PC-9 (cell line): ENCODE measurements at regions of chr1 and their contacts with region 1.

Region 1: DNA sequence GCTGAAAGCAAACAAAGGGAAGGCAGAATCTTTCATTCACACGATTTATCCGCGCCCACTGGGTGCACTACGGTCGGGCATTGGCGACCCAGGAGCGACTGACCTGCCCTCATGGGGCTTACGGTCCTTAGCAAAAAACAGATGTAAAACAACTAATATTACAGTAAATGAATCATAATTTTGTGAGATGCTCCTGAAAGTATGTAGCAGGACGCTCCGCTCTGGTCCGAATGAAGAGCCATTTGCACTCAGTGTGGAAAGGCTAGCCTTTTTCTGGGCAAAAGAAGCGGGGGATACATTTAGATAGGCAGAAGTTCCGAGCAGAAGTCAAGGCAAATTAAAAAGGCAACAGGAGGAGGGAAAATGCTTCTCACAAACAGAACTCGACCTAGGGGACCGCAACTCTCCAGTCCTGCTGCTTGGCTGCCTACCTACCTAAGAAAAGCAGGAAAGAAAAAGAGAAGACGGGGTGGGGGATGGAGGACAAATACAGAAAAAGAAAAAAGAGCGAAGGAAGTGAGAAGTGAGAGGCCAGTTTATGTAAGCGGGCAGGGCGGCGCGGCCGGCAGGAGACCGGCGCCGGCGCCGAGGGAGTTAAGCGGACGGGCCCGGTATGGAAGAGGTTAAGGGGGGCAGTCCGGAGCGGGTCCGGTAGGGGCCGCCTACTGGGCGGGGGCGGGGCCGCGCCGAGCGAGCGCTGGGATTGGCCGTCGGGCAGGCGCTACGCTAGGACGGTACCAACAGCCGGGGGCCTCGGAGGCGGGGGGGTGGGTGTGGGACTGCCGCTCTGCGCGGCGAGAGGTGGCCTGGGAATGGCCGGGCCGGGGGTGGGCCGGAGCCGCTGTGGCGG is at the start of gene FAM20B:
- DNase-seq: peak; percentile 81 to 94
- H3K4me3 ChIP-seq: peak within 1 kb of the TSS; percentile 93
- H3K27ac ChIP-seq: peak within 1 kb of the TSS; percentile 98
- H3K4me1 ChIP-seq: peaks cover 37% of the 10 kb centered on the region
- H3K27me3 ChIP-seq: no peaks in the 10 kb centered on the region
- CTCF ChIP-seq: no peak
- total RNA-seq, gene FAM20B: 68.1 and 80.5 TPM in 2 replicates

Region 2: GRCh38 chr1:179002552-179003345 is 22.6 kb before region 1 on chr1:
- CTCF ChIA-PET with region 1: no interaction called
- POLR2A ChIA-PET with region 1: no interaction called
- intact Hi-C with region 1: no loop called
- DNase-seq: peak in 1 of 2 experiments; percentile 62
- H3K4me3 ChIP-seq: peak overlapping the region; percentile 5; the same call in 1 of the 2 replicates
- H3K27ac ChIP-seq: no peak overlapping the region
- H3K4me1 ChIP-seq: peaks cover 11% of the 10 kb centered on the region
- H3K27me3 ChIP-seq: no peaks in the 10 kb centered on the region
- CTCF ChIP-seq: peak; percentile 97

Region 3: GRCh38 chr1:179058487-179059483 is 33.4 kb after region 1 on chr1:
- CTCF ChIA-PET with region 1: no interaction called
- POLR2A ChIA-PET with region 1: interaction called, 7 read pairs
- intact Hi-C with region 1: loop called (anchors 5 kb)
- DNase-seq: peak in 1 of 2 experiments; percentile 67
- H3K4me3 ChIP-seq: no peak overlapping the region
- H3K27ac ChIP-seq: peak overlapping the region; percentile 96
- H3K4me1 ChIP-seq: peaks cover 54% of the 10 kb centered on the region
- H3K27me3 ChIP-seq: no peaks in the 10 kb centered on the region
- CTCF ChIP-seq: no peak